Posterior vena cava (tissue), 2 donors: ENCODE measurements at regions of chr7 and their contacts with region 1.

Region 1: DNA sequence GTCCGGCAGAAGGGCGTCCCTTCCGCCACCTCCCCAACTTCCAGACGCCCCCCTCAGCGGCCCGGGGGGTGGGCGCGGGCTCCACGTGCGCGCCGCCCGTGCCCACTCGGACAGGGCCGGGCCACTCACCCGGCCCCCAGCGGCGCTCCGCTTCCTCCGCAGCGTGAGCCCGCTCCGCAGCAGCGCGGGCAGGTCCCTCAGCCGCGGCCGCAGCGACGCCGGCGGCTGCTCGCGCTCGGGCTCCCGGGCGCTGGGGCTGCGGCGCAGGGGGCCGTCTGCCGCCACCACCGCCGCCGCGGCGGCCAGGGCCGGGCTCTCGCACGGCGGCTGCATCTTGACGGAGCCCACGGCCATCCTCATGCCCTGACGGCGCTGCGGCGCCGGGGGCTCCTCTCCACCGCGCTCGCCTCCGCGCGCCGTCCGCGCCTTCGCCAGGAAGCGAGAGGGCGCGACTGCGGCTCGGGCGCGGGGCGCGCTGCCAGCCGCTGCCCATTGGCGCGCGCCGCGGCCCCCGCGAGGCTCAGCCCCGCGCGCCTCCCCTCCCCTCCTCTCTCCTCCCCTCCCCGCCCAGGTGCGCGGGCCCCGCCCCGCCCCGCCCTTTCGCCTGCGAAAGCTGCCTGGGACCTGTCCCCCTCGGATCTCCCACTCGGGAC is at the start of gene RAPGEF5:
- DNase-seq: no peak
- total RNA-seq, gene RAPGEF5: 56.9 to 61.5 TPM

Region 2: GRCh38 chr7:21076054-21076453 is 1280.8 kb before region 1 on chr7:
- intact Hi-C with region 1: loop called in 1 of 2 experiments (anchors 5 kb)
- DNase-seq: no peak

Region 3: GRCh38 chr7:22402250-22402649 is 45.4 kb after region 1 on chr7:
- intact Hi-C with region 1: no loop called
- DNase-seq: no peak

Region 4: GRCh38 chr7:22445140-22445743 is 88.4 kb after region 1 on chr7:
- intact Hi-C with region 1: loop called in 1 of 2 experiments (anchors 10 kb)
- DNase-seq: peak; percentile 89

Region 5: GRCh38 chr7:22896917-22897316 is 540.1 kb after region 1 on chr7:
- intact Hi-C with region 1: no loop called
- DNase-seq: no peak